ENCODE measurements at regions of chr14 and their contacts with region 1.

Region 1: GRCh38 chr14:67166450-67166853 is 22.8 kb upstream of the GARIN2 start:
- DNase-seq: no peak
- ATAC-seq: no peak
- H3K4me3 Mint-ChIP-seq: no peak overlapping the region
- H3K27ac Mint-ChIP-seq: no peak overlapping the region
- H3K4me1 Mint-ChIP-seq: no peaks in the 10 kb centered on the region
- H3K27me3 Mint-ChIP-seq: no peaks in the 10 kb centered on the region
- CTCF ChIP-seq: no peak

Region 2: GRCh38 chr14:67335781-67336180 is 169.3 kb after region 1 on chr14:
- CTCF ChIA-PET with region 1: interaction called, 4 read pairs
- POLR2A ChIA-PET with region 1: no interaction called
- intact Hi-C with region 1: loop called (anchors 1 kb)
- DNase-seq: no peak
- ATAC-seq: no peak
- H3K4me3 Mint-ChIP-seq: no peak overlapping the region
- H3K27ac Mint-ChIP-seq: no peak overlapping the region
- H3K4me1 Mint-ChIP-seq: no peaks in the 10 kb centered on the region
- H3K27me3 Mint-ChIP-seq: no peaks in the 10 kb centered on the region
- CTCF ChIP-seq: no peak

Region 3: GRCh38 chr14:68392393-68393141 is 1226.1 kb after region 1 on chr14:
- CTCF ChIA-PET with region 1: no interaction called
- POLR2A ChIA-PET with region 1: no interaction called
- intact Hi-C with region 1: no loop called
- DNase-seq: no peak
- ATAC-seq: no peak
- H3K4me3 Mint-ChIP-seq: peak overlapping the region; percentile 39
- H3K27ac Mint-ChIP-seq: peak overlapping the region; percentile 84
- H3K4me1 Mint-ChIP-seq: peaks cover 58% of the 10 kb centered on the region
- H3K27me3 Mint-ChIP-seq: no peaks in the 10 kb centered on the region
- CTCF ChIP-seq: no peak